Aorta (tissue), 5 donors: ENCODE measurements at regions of chr1 and their contacts with region 1.

Region 1: DNA sequence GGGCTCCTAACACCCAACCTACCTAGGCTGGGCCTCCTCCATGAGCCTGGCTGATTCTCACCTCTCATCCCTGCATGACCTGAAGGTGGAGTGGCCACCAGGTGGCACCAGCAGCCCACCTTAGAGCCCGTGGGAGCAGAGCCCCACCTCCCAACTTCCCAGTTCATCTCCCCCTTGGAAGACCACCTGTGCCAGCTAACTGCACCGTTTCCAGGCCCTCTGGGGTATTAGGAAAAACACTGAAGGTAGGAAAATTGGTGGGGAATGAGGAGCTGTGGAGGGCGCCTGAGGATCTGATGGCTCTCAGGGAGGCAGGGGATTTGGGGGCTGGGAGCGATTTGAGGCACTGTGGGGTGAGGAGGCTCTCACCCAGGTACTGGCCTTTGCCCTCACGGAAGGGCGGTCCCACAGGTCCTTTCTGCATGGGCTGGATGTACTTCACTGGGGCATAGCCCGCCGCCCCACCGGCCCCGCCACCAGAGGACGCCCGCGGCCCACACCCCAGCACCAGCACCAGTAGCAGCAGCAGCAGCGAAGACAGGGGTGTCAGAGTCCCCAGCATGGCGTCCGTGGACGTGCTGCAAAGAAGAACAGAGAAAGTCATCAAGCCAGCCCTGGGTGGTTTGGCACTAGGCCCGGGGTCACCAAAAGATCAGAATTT is 11.1 kb downstream of the ADPRS start:
- DNase-seq: peak; percentile 89 to 94
- ATAC-seq: peak; percentile 89
- H3K4me3 ChIP-seq: no peak overlapping the region
- H3K27ac ChIP-seq: no peak overlapping the region
- H3K4me1 ChIP-seq: no peaks in the 10 kb centered on the region
- H3K27me3 ChIP-seq: no peaks in the 10 kb centered on the region

Region 2: GRCh38 chr1:36134505-36135329 is 34.9 kb after region 1 on chr1:
- intact Hi-C with region 1: loop called (anchors 1 to 2 kb)
- DNase-seq: peak; percentile 72 to 85
- ATAC-seq: peak; percentile 84
- H3K4me3 ChIP-seq: no peak overlapping the region
- H3K27ac ChIP-seq: peak overlapping the region; percentile 84 to 99
- H3K4me1 ChIP-seq: peaks cover 0 to 1% of the 10 kb centered on the region in 2 donors
- H3K27me3 ChIP-seq: no peaks in the 10 kb centered on the region

Region 3: GRCh38 chr1:36187800-36188593 is 88.2 kb after region 1 on chr1:
- intact Hi-C with region 1: loop called (anchors 1 to 5 kb)
- DNase-seq: peak; percentile 91 to 92
- ATAC-seq: peak; percentile 95
- H3K4me3 ChIP-seq: no peak overlapping the region
- H3K27ac ChIP-seq: peak overlapping the region in 1 of 2 donors; percentile 87
- H3K4me1 ChIP-seq: no peaks in the 10 kb centered on the region
- H3K27me3 ChIP-seq: no peaks in the 10 kb centered on the region

Region 4: GRCh38 chr1:36285448-36286101 is 185.8 kb after region 1 on chr1:
- intact Hi-C with region 1: loop called (anchors 5 kb)
- DNase-seq: peak in 1 of 2 donors; percentile 59
- ATAC-seq: peak; percentile 88
- H3K4me3 ChIP-seq: no peak overlapping the region
- H3K27ac ChIP-seq: no peak overlapping the region
- H3K4me1 ChIP-seq: no peaks in the 10 kb centered on the region
- H3K27me3 ChIP-seq: no peaks in the 10 kb centered on the region

Region 5: DNA sequence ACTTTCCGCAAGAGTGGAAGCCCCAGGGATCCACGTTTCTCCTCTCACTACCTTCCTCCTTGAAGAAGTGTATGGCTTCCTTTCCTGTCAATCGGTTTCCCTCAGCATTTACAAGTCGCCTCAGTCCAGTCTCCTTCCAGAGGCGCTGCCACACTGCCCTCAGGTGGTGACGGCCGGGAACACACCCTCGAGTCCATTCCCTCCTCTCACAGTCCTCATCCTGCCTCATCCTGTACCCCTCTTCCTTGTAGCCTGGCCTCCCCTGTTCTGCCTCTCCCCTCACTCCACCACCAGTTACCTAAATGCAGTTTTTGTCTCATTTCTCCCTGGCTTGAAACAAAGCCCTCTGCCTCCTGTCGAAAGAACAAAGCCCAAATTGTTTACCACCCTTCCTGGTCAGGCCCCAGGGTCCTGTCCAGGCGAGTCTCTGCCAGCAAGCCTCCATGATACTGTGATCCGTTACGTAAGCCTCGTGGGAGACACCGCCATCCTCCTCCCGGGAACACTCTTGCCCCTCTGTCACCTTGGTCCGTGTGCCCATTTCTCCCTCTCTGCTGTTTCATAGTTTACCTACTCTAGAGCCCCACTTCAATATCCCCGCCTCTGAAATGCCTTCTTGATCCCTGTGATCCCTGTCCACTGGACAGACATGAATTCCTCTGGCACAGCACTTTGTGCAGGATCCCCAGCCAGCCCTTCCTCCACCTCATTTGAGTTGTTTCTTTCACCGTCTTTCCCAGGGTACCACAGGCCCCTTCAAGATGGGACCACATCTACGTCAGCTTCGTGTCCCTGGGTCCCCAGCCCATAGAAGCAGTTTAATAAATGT is 321.2 kb after region 1 on chr1:
- intact Hi-C with region 1: loop called in 1 of 2 experiments (anchors 10 kb)
- DNase-seq: peak; percentile 89 to 97
- ATAC-seq: peak; percentile 95
- H3K4me3 ChIP-seq: no peak overlapping the region
- H3K27ac ChIP-seq: no peak overlapping the region
- H3K4me1 ChIP-seq: no peaks in the 10 kb centered on the region
- H3K27me3 ChIP-seq: no peaks in the 10 kb centered on the region